Endothelial cell of umbilical vein (primary cell): ENCODE measurements at regions of chr15 and their contacts with region 1.

Region 1: GRCh38 chr15:61034678-61035291 is 194.3 kb downstream of the RORA start:
- DNase-seq: peak; percentile 92
- H3K4me3 ChIP-seq: peak overlapping the region in 1 of 3 experiments; percentile 52
- H3K27ac ChIP-seq: peak overlapping the region; percentile 95
- H3K4me1 ChIP-seq: peaks cover 61% of the 10 kb centered on the region
- H3K27me3 ChIP-seq: no peaks in the 10 kb centered on the region
- CTCF ChIP-seq: no peak
- POLR2A ChIP-seq: no peak

Region 2: GRCh38 chr15:60644903-60645302 is 389.9 kb before region 1 on chr15:
- CTCF ChIA-PET with region 1: no interaction called
- POLR2A ChIA-PET with region 1: interaction called, 6 read pairs
- dilution Hi-C with region 1: no loop called
- intact Hi-C with region 1: loop called (anchors 1 kb)
- DNase-seq: peak; percentile 87
- H3K4me3 ChIP-seq: no peak overlapping the region
- H3K27ac ChIP-seq: peak overlapping the region; percentile 46
- H3K4me1 ChIP-seq: peaks cover 23% of the 10 kb centered on the region
- H3K27me3 ChIP-seq: no peaks in the 10 kb centered on the region
- CTCF ChIP-seq: no peak
- POLR2A ChIP-seq: no peak

Region 3: DNA sequence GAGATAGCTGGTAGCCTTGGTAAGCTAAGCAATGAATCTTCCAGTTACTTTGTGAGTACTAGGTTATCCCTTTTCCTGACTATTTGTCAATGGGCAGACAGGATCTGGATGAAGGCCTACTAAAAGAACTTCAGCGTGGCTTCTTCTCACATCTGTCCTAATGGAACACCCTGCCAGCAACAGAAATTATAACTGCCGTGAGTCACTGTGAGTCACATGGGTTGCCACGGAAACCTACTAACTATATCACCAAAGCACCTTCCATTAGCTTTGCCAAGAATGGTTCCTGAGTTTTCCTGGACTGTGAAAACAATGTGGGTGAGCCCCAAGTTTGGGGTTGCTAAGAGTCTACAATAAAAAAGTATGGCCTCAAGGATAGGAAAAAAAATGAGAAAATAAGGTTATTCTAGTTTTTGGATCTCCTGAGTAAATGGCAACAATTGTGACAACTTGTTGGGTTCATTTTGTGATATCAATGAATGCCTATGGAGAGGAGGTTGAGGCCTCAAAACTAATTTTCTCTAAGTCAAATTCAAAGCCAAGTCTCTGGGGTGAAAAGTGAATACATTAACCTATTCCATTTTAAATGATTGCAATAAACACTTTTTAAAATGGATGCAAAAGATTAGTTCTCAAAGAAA is 360.7 kb before region 1 on chr15:
- CTCF ChIA-PET with region 1: no interaction called
- POLR2A ChIA-PET with region 1: no interaction called
- dilution Hi-C with region 1: no loop called
- intact Hi-C with region 1: no loop called
- DNase-seq: peak; percentile 97
- H3K4me3 ChIP-seq: no peak overlapping the region
- H3K27ac ChIP-seq: peak overlapping the region; percentile 68
- H3K4me1 ChIP-seq: peaks cover 9% of the 10 kb centered on the region
- H3K27me3 ChIP-seq: no peaks in the 10 kb centered on the region
- CTCF ChIP-seq: no peak
- POLR2A ChIP-seq: no peak

Region 4: DNA sequence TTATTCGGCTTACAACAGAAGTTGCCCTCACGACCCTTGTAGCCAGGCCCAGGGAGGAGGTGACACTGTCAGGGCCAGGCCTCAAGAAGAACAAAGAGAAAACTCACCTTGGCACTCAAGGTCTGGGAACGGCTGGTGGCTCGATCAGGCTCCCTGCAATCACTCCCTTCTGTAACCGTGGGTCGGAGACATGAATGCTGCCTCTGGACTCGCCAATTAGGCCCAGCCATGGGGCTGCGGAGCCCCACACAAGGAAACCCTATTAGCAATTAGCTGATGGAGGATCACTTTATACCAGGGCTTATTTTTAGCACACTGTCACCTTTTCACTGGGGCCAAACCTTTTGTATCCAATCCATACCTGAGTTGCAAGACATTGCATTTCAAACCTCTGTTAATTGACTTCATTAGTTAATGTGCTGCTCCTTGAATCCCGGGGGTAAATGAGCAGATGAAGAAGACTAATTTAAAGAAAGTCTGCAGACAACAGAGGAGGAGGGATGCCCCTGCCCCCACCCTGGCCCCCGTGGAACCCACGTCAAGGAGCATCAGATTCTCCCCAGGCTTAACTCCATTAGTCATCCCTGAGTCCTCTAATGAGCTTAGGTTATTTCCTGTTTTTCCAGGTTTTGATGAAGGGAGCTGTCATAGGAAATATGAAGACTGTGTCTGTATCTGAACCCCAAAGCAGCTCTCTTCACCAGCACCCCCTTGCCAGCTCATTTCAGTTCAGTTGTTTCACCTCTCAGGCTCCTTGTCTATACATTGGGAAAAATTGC is 61.0 kb before region 1 on chr15:
- CTCF ChIA-PET with region 1: no interaction called
- POLR2A ChIA-PET with region 1: no interaction called
- dilution Hi-C with region 1: no loop called
- intact Hi-C with region 1: loop called (anchors 1 kb)
- DNase-seq: peak; percentile 69
- H3K4me3 ChIP-seq: no peak overlapping the region
- H3K27ac ChIP-seq: peak overlapping the region; percentile 85
- H3K4me1 ChIP-seq: peaks cover 53% of the 10 kb centered on the region
- H3K27me3 ChIP-seq: no peaks in the 10 kb centered on the region
- CTCF ChIP-seq: no peak
- POLR2A ChIP-seq: no peak

Region 5: DNA sequence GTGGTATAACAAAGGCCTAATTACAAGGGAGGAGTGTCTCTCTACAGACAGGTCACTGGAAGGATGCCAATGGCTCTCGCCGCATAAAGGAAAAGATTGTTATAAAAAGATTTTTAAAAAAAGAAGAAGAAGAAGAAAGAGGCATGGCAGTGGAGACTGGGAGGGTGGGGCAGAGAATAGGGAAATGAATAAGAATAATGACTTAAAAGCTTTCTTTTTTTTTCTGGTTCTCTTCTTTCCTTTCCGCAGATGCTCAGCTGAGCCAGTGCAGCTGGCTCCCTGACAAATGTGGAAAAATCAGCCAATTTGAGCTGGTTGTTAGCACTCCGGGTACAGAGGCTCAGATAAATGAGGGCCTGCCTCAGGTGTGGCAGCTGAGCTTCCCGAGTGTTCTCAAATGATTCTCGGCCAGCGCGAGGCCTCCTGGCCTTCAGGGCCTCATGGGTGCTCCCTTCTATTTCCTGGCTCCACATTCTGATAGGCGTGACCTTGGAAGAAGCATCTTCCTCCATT is 39.8 kb before region 1 on chr15:
- CTCF ChIA-PET with region 1: interaction called, 3 read pairs
- POLR2A ChIA-PET with region 1: no interaction called
- dilution Hi-C with region 1: no loop called
- intact Hi-C with region 1: loop called (anchors 1 kb)
- DNase-seq: peak; percentile 47
- H3K4me3 ChIP-seq: no peak overlapping the region
- H3K27ac ChIP-seq: no peak overlapping the region
- H3K4me1 ChIP-seq: peaks cover 11% of the 10 kb centered on the region
- H3K27me3 ChIP-seq: no peaks in the 10 kb centered on the region
- CTCF ChIP-seq: no peak
- POLR2A ChIP-seq: no peak

Region 6: GRCh38 chr15:61011576-61012336 is 23.0 kb before region 1 on chr15:
- CTCF ChIA-PET with region 1: no interaction called
- POLR2A ChIA-PET with region 1: no interaction called
- dilution Hi-C with region 1: no loop called
- intact Hi-C with region 1: no loop called
- DNase-seq: no peak
- H3K4me3 ChIP-seq: no peak overlapping the region
- H3K27ac ChIP-seq: no peak overlapping the region
- H3K4me1 ChIP-seq: no peaks in the 10 kb centered on the region
- H3K27me3 ChIP-seq: peaks cover 0 to 3% of the 10 kb centered on the region in 2 experiments
- CTCF ChIP-seq: no peak
- POLR2A ChIP-seq: no peak

Region 7: DNA sequence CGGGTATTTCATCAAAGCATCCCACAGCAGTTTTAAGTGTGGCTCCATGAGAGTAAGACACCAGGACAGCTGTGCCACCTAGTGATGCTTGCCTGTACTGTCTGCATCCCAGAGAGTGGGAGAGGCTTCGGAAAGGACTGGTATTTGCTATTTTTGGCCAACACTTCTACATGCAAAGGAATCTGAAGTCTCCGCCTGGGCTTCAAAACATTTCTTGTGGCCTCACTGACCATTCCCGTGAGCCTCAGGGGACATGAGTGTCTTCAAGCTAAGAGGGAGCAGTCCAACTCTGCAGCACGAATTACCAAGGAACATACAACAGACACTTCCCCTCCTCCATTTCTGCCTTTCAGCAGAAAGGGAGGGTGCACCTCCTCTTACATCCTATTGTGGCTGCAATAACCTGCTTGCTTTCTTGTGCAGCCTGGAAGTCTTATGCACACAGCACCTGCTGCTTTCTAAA is 16.8 kb after region 1 on chr15:
- CTCF ChIA-PET with region 1: interaction called, 8 read pairs
- POLR2A ChIA-PET with region 1: interaction called, 3 read pairs
- dilution Hi-C with region 1: no loop called
- intact Hi-C with region 1: loop called (anchors 1 kb)
- DNase-seq: peak; percentile 70
- H3K4me3 ChIP-seq: no peak overlapping the region
- H3K27ac ChIP-seq: no peak overlapping the region
- H3K4me1 ChIP-seq: no peaks in the 10 kb centered on the region
- H3K27me3 ChIP-seq: no peaks in the 10 kb centered on the region
- CTCF ChIP-seq: peak; percentile 68 to 78
- POLR2A ChIP-seq: no peak